PC-3 (cell line): ENCODE measurements at regions of chr4 and their contacts with region 1.

Region 1: DNA sequence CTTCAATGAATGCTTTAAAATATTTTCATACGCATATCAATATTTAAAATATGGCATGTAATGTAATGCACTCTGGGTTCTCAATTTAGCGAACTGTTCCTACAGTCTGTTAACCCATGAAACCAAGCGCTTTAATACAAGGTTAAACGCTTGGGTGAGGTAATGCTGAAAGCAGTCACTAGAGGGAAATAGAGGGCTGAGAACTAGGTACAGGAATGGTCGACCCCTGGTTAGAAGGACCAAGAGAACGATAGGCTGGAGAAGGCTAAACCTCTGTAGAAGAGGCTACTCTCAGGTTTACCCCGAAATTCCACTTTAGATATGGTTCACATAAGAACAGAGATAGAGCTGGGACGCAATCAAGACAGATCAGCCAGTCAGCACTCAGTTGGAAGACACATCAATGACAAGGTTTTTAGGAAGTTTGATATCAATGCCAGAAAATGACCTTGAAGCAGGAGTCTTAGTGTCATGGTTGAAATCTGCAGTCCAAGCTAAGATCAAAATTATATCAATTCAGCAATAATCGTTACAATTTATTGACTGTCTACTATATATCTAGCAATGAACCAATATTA is 26.9 kb downstream of the ARSJ start:
- DNase-seq: peak; percentile 74
- ATAC-seq: peak; percentile 81
- H3K4me3 ChIP-seq: no peak overlapping the region
- H3K27ac ChIP-seq: no peak overlapping the region
- H3K4me1 ChIP-seq: peaks cover 24% of the 10 kb centered on the region
- H3K27me3 ChIP-seq: no peaks in the 10 kb centered on the region
- CTCF ChIP-seq: peak; percentile 87

Region 2: DNA sequence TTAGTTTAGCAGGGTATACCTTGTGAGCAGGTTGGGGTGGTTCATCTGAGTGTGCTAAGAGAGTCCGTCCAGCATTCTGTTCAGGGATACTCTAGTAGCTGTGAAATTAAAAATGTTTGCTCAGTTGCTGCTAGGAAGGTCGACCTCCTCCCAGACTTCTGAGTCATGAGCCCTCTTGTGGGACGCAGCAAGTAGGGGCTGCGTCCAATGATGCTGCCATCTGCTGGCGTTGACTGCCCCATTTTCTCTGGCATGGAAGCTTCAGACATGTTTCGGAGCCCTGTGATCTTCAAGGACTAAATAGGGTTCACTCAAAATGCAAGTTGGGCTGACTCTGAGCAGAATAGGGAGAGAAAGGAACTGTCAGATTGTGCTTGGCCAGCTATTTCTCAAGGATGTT is 227.9 kb after region 1 on chr4:
- CTCF ChIA-PET with region 1: no interaction called
- POLR2A ChIA-PET with region 1: no interaction called
- intact Hi-C with region 1: loop called (anchors 1 kb)
- DNase-seq: peak; percentile 70
- ATAC-seq: peak; percentile 67
- H3K4me3 ChIP-seq: no peak overlapping the region
- H3K27ac ChIP-seq: no peak overlapping the region
- H3K4me1 ChIP-seq: 0 out of 2 replicates have a peak, but pooled peaks cover 3% of the 10 kb centered on the region
- H3K27me3 ChIP-seq: no peaks in the 10 kb centered on the region
- CTCF ChIP-seq: peak; percentile 76